Heart left ventricle (tissue), 16 donors: ENCODE measurements at regions of chr4 and their contacts with region 1.

Region 1: DNA sequence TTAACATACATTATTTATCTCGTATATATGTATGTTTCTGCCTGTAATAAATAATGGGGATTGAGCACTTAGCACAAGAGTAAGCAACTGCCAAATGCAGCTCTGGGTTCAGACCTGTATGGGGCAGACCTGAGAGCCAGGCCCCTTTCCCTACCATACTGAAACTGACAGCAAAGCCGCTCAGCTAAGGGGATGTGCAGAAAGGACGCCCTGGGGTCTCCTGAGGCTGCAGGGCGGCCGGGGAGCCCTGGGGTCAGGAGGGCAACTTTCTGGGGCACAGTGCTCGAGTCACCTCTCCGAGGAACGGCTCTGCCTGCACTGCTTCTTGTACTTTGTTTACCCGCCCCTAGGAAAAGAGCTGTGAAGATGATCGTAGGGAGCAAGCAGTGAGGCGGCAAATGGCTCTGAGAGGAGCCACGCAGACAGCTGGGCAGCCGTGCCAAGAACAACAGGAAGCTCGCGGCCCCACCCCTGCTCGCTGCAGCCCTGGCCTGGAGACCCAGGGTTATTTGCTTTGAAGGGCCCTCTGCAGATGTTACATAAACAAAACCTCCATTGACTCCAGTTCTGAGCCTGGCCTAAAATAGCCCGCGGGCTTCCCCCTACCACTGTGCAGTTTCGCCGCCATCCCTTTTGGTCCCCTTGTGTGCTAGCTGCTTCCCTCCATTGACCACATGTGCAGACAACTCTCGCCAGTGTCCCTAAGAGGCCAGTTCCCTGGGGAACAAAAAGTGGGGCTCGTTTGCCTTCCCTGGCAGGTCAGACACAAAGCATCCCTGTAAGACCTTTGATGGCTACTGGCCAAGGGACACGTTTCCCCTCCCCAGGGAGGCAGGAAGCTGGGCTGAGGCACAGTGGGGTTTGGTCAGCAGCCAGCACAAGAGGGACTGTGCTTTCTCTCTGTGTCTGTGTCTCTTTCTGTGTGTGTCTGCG is 111.3 kb upstream of the LNX1 start:
- DNase-seq: peak; percentile 86 to 93 (median 88)
- ATAC-seq: peak; percentile 84 to 97 (median 96)
- H3K4me3 ChIP-seq: peak overlapping the region in 10 of 12 donors; percentile 8 to 43 (median 34)
- H3K27ac ChIP-seq: peak overlapping the region; percentile 39 to 78 (median 68)
- H3K4me1 ChIP-seq: peaks cover 6 to 40% (median 25%) of the 10 kb centered on the region in 12 donors
- H3K27me3 ChIP-seq: no peaks in the 10 kb centered on the region
- CTCF ChIP-seq: peak in 1 of 12 donors; percentile 24
- POLR2A ChIP-seq: no peak

Region 2: GRCh38 chr4:53490965-53491622 is 211.5 kb before region 1 on chr4:
- intact Hi-C with region 1: loop called in 3 of 10 experiments (anchors 5 to 10 kb)
- DNase-seq: peak in 1 of 5 donors; percentile 25
- ATAC-seq: peak in 2 of 4 donors; percentile 48 to 73
- H3K4me3 ChIP-seq: no peak overlapping the region
- H3K27ac ChIP-seq: peak overlapping the region in 2 of 12 donors; percentile 4 to 47
- H3K4me1 ChIP-seq: peaks cover 0 to 11% (median 2%) of the 10 kb centered on the region in 12 donors
- H3K27me3 ChIP-seq: no peaks in the 10 kb centered on the region
- CTCF ChIP-seq: peak; percentile 44 to 80 (median 65)
- POLR2A ChIP-seq: no peak

Region 3: DNA sequence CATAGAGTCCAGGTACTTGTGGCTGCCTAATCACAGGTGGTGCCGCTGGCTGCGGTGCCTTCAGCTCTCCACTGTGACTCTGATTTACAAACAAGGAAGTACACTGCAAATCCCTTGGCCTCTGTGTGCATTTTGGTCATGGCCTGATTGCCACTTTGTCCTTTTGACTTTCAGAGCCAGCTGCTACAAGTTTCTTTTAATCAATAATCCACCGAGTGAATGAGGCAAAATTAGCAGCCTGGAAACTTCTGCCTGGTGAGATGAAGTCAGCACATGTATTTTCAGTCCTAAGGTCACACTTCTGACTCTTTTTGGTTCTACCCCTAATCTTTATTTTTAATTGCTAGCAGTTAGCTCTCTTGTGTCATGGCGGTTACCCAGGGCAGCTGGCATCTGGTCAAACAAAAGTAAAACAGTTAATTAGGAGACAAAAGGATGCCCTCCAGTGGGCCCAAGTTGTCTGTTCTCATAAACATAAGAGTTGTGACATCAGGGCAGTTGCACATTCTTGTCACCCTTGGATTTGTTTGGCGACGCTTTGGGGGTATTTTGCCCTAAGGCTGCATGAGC is 49.0 kb before region 1 on chr4:
- intact Hi-C with region 1: loop called in 2 of 10 experiments (anchors 5 kb)
- DNase-seq: no peak
- ATAC-seq: peak in 1 of 4 donors; percentile 25
- H3K4me3 ChIP-seq: no peak overlapping the region
- H3K27ac ChIP-seq: peak overlapping the region in 7 of 12 donors; percentile 5 to 77 (median 32)
- H3K4me1 ChIP-seq: peaks cover 0 to 38% (median 17%) of the 10 kb centered on the region in 12 donors
- H3K27me3 ChIP-seq: no peaks in the 10 kb centered on the region
- CTCF ChIP-seq: peak in 3 of 12 donors; percentile 6 to 34 (median 17)
- POLR2A ChIP-seq: no peak

Region 4: GRCh38 chr4:53908661-53909078 is 206.1 kb after region 1 on chr4:
- intact Hi-C with region 1: loop called in 8 of 10 experiments (anchors 5 to 10 kb)
- DNase-seq: peak in 3 of 5 donors; percentile 37 to 50 (median 44)
- ATAC-seq: peak; percentile 84 to 94 (median 93)
- H3K4me3 ChIP-seq: peak overlapping the region in 8 of 12 donors; percentile 12 to 42 (median 27)
- H3K27ac ChIP-seq: peak overlapping the region in 8 of 12 donors; percentile 27 to 63 (median 40)
- H3K4me1 ChIP-seq: peaks cover 0 to 37% (median 14%) of the 10 kb centered on the region in 12 donors
- H3K27me3 ChIP-seq: peaks cover 0 to 32% (median 11%) of the 10 kb centered on the region in 9 donors
- CTCF ChIP-seq: peak; percentile 40 to 83 (median 67)
- POLR2A ChIP-seq: no peak

Region 5: DNA sequence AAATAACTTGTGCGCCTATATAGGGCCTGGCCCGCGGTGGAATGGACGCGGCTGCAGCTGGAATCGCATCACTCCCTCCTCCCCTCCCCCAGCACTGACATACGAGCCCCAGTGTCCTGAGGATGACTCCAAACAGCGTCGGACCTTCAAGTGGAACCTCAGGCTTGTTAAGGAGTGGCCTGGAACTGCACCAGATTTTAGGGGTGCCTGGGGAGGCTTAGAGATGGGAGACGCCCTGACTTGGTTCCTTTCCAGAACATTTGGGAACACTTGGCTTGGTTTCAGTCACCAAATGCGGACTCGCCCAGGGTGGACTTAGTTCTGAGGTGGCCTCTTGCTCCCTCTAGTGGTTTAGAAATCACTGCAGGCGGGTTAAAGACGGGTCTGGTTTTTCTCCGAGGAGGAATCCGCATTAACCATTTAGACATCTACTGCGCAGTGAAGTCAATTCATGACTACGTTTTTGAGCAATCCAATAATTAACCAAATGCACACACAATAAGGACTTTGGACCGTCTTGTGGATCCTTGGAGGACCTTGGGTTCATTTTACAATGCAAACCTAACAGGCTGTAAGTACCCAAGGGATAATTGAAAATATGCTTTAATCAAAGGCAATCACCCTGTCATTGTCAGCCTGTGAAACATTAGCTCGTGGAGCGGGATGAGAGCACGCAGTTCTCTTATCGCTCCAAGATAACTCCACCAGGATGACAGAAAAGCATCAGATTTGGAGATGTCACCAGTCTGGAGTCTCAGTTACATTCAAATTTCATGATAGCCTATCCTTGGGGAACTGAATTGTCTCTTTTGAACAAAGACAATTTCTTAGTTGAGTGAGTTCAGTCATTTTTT is 515.3 kb after region 1 on chr4:
- intact Hi-C with region 1: loop called in 6 of 10 experiments (anchors 2 to 10 kb)
- DNase-seq: peak; percentile 77 to 83 (median 80)
- ATAC-seq: peak; percentile 77 to 92 (median 92)
- H3K4me3 ChIP-seq: peak overlapping the region in 10 of 12 donors; percentile 28 to 58 (median 48)
- H3K27ac ChIP-seq: peak overlapping the region in 4 of 12 donors; percentile 39 to 41 (median 40)
- H3K4me1 ChIP-seq: peaks cover 0 to 18% (median 5%) of the 10 kb centered on the region in 12 donors
- H3K27me3 ChIP-seq: peaks cover 0 to 41% (median 0%) of the 10 kb centered on the region in 9 donors
- CTCF ChIP-seq: peak; percentile 80 to 97 (median 94)
- POLR2A ChIP-seq: no peak

Region 6: GRCh38 chr4:54233277-54233696 is 530.7 kb after region 1 on chr4:
- intact Hi-C with region 1: loop called in 5 of 10 experiments (anchors 5 to 10 kb)
- DNase-seq: peak; percentile 85 to 92 (median 89)
- ATAC-seq: peak; percentile 64 to 88 (median 85)
- H3K4me3 ChIP-seq: peak overlapping the region; percentile 22 to 80 (median 58)
- H3K27ac ChIP-seq: peak overlapping the region in 11 of 12 donors; percentile 19 to 89 (median 68)
- H3K4me1 ChIP-seq: peaks cover 6 to 51% (median 40%) of the 10 kb centered on the region in 12 donors
- H3K27me3 ChIP-seq: peaks cover 26 to 51% (median 43%) of the 10 kb centered on the region in 9 donors
- CTCF ChIP-seq: peak; percentile 67 to 89 (median 80)
- POLR2A ChIP-seq: no peak